HepG2 (cell line): ENCODE measurements at regions of chr11 and their contacts with region 1.

Region 1: GRCh38 chr11:82988936-82989627 is 82.6 kb downstream of the RAB30 start:
- DNase-seq: peak; percentile 96
- ATAC-seq: peak; percentile 99
- H3K4me3 ChIP-seq: peak overlapping the region; percentile 20 to 53 (median 22); a peak in 4 of 6 replicates
- H3K27ac ChIP-seq: peak overlapping the region; percentile 82
- H3K4me1 ChIP-seq: peaks cover 44% of the 10 kb centered on the region
- H3K27me3 ChIP-seq: no peaks in the 10 kb centered on the region
- CTCF ChIP-seq: peak; percentile 14; the same call in 1 of the 2 replicates
- EP300 ChIP-seq: peak; percentile 62 to 74; a peak in 3 of 4 replicates
- POLR2A ChIP-seq: no peak
- RAD21 ChIP-seq: peak; percentile 34; the same call in 1 of the 2 replicates

Region 2: GRCh38 chr11:82906244-82906654 is 82.8 kb before region 1 on chr11:
- CTCF ChIA-PET with region 1: no interaction called
- POLR2A ChIA-PET with region 1: no interaction called
- in situ Hi-C with region 1: no loop called
- intact Hi-C with region 1: loop called (anchors 2 kb)
- DNase-seq: peak; percentile 26
- ATAC-seq: no peak
- H3K4me3 ChIP-seq: no peak overlapping the region
- H3K27ac ChIP-seq: no peak overlapping the region
- H3K4me1 ChIP-seq: peaks cover 32% of the 10 kb centered on the region
- H3K27me3 ChIP-seq: no peaks in the 10 kb centered on the region
- CTCF ChIP-seq: peak; percentile 51
- EP300 ChIP-seq: no peak
- POLR2A ChIP-seq: no peak
- RAD21 ChIP-seq: peak; percentile 32; the same call in 1 of the 2 replicates

Region 3: DNA sequence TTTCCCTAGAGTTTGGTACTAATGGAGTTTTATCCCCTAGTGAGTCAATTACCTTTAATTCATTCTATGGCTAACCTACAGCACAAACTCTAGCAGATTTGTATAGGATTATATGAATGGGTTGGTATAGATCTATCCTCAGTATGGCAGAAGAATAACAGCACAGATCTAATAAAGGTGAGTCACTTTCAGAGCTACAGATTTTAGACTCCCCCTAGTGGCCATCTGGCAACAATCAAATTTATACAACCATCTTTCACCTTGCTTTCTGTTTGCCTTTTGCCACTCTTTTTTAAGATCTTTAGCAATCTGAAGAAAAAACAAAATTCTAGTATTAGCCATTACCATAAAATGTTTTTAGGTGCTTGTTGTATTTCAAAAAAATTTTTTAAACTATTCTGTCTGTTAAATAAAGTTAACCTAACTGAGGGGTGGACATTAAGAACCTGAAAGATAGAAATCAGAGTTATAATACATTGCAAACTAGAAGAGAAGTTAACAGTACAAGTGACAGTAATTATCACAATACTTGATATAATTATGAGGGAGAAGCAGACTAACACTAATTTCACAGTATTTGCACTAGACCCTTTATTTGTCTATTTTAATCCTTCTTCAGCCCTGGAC is 61.7 kb before region 1 on chr11:
- CTCF ChIA-PET with region 1: no interaction called
- POLR2A ChIA-PET with region 1: no interaction called
- in situ Hi-C with region 1: no loop called
- intact Hi-C with region 1: loop called (anchors 1 kb)
- DNase-seq: peak; percentile 43
- ATAC-seq: peak; percentile 81
- H3K4me3 ChIP-seq: no peak overlapping the region
- H3K27ac ChIP-seq: no peak overlapping the region
- H3K4me1 ChIP-seq: no peaks in the 10 kb centered on the region
- H3K27me3 ChIP-seq: no peaks in the 10 kb centered on the region
- CTCF ChIP-seq: peak; percentile 66
- EP300 ChIP-seq: no peak
- POLR2A ChIP-seq: no peak
- RAD21 ChIP-seq: no peak